H1 (cell line): ENCODE measurements at regions of chr9 and their contacts with region 1.

Region 1: DNA sequence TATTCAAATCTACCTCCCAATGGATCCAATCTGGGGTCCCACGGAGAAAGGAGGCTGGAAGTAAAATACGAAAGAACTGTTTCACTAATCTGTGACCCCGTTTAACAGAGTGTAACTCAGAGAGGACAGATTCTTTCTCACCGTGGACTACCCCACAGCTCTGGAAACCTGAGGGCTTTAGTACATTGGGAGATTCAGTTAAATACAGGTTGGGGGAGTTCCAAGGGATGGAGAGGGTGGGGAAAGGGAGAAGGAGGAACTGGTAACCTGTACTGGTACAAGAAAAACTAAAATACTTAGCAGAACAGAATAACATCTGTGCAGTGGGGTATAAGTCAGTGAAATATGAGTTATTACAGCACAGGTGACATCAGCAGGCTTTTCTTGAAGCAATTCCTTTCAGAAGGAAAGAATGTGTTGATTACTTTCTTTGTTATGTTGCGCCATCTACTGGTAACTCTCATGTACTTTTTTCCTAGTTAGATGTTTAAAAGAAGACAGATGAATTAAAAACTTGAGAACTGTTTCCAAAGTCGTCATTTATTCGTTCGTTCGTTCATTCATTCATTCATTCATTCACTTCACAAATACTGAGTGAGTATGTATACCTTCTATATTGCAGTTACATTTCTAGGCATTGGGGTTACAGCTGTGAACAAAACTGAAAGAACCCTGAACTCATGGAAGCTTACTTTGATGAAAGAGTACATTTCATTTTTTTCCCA is 30.0 kb upstream of the STOM start:
- DNase-seq: no peak
- H3K4me3 ChIP-seq: no peak overlapping the region
- H3K27ac ChIP-seq: no peak overlapping the region
- H3K4me1 ChIP-seq: peaks cover 0 to 6% (median 0%) of the 10 kb centered on the region in 4 experiments; a peak in 1 of 7 replicates
- H3K27me3 ChIP-seq: no peaks in the 10 kb centered on the region
- CTCF ChIP-seq: peak in 2 of 3 experiments; percentile 49 to 61; a peak in 2 of 4 replicates
- EP300 ChIP-seq: no peak
- POLR2A ChIP-seq: no peak
- RAD21 ChIP-seq: peak; percentile 77 to 84

Region 2: GRCh38 chr9:121331992-121332685 is 67.9 kb before region 1 on chr9:
- CTCF ChIA-PET with region 1: interaction called, 14 read pairs
- POLR2A ChIA-PET with region 1: no interaction called
- DNase-seq: no peak
- H3K4me3 ChIP-seq: no peak overlapping the region
- H3K27ac ChIP-seq: no peak overlapping the region
- H3K4me1 ChIP-seq: no peaks in the 10 kb centered on the region
- H3K27me3 ChIP-seq: no peaks in the 10 kb centered on the region
- CTCF ChIP-seq: peak in 1 of 3 experiments; percentile 3; a peak in 2 of 4 replicates
- EP300 ChIP-seq: no peak
- POLR2A ChIP-seq: no peak
- RAD21 ChIP-seq: no peak

Region 3: GRCh38 chr9:121340676-121341392 is 59.2 kb before region 1 on chr9:
- CTCF ChIA-PET with region 1: interaction called, 14 read pairs
- POLR2A ChIA-PET with region 1: no interaction called
- DNase-seq: no peak
- H3K4me3 ChIP-seq: no peak overlapping the region
- H3K27ac ChIP-seq: no peak overlapping the region
- H3K4me1 ChIP-seq: no peaks in the 10 kb centered on the region
- H3K27me3 ChIP-seq: no peaks in the 10 kb centered on the region
- CTCF ChIP-seq: no peak
- EP300 ChIP-seq: no peak
- POLR2A ChIP-seq: no peak
- RAD21 ChIP-seq: no peak

Region 4: DNA sequence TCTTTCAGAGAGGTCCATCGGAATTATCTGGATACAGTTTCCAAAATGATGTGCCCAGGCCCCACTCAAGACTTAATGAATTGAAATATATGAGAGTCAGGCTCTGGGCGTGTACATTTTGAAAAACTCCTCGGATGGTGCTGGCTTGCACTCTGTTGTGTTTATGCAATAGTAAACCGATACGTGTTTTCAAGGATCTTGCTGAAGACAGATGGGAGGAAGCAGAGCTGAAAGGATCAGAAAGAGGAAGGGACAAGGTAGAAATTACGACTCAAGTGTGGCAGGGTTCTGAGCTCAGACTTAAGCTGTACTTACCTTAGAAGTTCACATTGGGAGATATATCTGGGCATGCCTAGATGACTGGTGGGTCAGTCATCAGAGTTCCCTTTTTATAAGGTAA is 16.3 kb before region 1 on chr9:
- CTCF ChIA-PET with region 1: interaction called, 16 read pairs
- POLR2A ChIA-PET with region 1: no interaction called
- DNase-seq: no peak
- H3K4me3 ChIP-seq: no peak overlapping the region
- H3K27ac ChIP-seq: no peak overlapping the region
- H3K4me1 ChIP-seq: peaks cover 0 to 5% (median under 1%) of the 10 kb centered on the region in 4 experiments; a peak in 3 of 7 replicates
- H3K27me3 ChIP-seq: no peaks in the 10 kb centered on the region
- CTCF ChIP-seq: no peak
- EP300 ChIP-seq: no peak
- POLR2A ChIP-seq: no peak
- RAD21 ChIP-seq: no peak

Region 5: GRCh38 chr9:121935739-121936138 is 535.7 kb after region 1 on chr9:
- CTCF ChIA-PET with region 1: no interaction called
- POLR2A ChIA-PET with region 1: no interaction called
- DNase-seq: peak in 1 of 2 experiments; percentile 60
- H3K4me3 ChIP-seq: no peak overlapping the region
- H3K27ac ChIP-seq: no peak overlapping the region
- H3K4me1 ChIP-seq: peaks cover 0 to 5% (median 1%) of the 10 kb centered on the region in 4 experiments; a peak in 2 of 7 replicates
- H3K27me3 ChIP-seq: no peaks in the 10 kb centered on the region; a peak in 2 of 7 replicates
- CTCF ChIP-seq: peak in 2 of 3 experiments; percentile 35 to 55; a peak in 3 of 4 replicates
- EP300 ChIP-seq: no peak
- POLR2A ChIP-seq: no peak
- RAD21 ChIP-seq: peak; percentile 53 to 59